Activated CD4-positive, alpha-beta T cell treated with anti-CD3 and anti-CD28 coated beads for 36 hours (primary cell): ENCODE measurements at regions of chr7 and their contacts with region 1.

Region 1: DNA sequence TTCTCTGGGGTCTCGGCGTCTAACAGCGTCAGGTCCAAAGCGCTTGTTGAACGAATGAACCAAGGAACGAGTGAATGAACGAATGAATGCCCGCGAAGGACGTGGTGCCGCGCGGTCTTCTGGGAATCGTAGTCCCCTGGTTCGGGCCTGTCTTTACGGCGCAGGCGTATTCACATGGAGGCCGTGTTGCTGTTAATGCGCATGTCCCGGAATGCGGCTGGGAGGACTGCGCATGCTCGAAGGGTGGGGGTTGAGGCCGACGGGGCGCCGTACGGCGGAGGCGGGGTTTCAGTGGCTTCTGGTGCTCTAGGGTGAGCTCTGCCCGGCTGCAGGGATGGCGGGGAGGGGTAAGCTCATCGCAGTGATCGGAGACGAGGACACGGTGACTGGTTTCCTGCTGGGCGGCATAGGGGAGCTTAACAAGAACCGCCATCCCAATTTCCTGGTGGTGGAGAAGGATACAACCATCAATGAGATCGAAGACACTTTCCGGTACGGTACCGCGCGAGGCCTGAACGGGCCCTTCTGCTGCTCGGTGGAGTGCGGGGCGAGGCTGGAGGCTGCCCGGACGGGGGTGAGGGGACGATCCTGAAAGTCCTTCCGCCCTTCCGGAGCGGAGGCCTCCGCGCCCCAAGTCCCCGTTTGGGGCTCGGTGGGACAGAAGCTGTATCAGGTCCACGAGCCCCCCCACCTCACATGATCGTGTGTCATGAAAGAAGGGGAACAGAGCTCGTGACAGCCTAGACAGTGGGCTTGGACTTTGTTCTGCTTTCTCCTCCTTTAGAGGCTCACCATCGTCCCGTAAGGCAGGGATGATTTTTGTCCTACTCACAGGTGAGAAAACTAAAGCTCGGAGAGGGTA is at the start of gene ATP6V1F:
- DNase-seq: peak; percentile 100
- ATAC-seq: peak; percentile 91
- H3K4me3 Mint-ChIP-seq: peak within 1 kb of the TSS; percentile 77
- H3K27ac Mint-ChIP-seq: peak within 1 kb of the TSS; percentile 90
- H3K4me1 Mint-ChIP-seq: peaks cover 13% of the 10 kb centered on the region
- H3K27me3 Mint-ChIP-seq: no peaks in the 10 kb centered on the region
- total RNA-seq, gene ATP6V1F: 109 to 159 TPM

Region 2: DNA sequence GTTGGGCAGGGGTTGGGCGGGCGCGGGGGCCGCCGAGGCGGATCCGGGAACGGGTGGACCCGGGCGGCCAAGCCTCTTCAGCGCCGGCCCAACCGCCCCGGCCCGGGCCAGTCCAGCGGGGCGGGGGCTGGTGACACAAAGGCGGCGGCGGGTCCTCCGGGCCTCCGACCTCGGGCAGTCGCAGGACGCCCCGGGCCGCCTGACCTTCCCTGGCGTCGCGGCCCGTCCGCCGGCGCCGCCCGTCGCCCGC is 332.0 kb before region 1 on chr7:
- CTCF ChIA-PET with region 1: no interaction called
- POLR2A ChIA-PET with region 1: no interaction called
- intact Hi-C with region 1: loop called (anchors 1 to 10 kb)
- DNase-seq: no peak
- ATAC-seq: no peak
- H3K4me3 Mint-ChIP-seq: peak overlapping the region; percentile 95
- H3K27ac Mint-ChIP-seq: no peak overlapping the region
- H3K4me1 Mint-ChIP-seq: peaks cover 27% of the 10 kb centered on the region
- H3K27me3 Mint-ChIP-seq: no peaks in the 10 kb centered on the region

Region 3: DNA sequence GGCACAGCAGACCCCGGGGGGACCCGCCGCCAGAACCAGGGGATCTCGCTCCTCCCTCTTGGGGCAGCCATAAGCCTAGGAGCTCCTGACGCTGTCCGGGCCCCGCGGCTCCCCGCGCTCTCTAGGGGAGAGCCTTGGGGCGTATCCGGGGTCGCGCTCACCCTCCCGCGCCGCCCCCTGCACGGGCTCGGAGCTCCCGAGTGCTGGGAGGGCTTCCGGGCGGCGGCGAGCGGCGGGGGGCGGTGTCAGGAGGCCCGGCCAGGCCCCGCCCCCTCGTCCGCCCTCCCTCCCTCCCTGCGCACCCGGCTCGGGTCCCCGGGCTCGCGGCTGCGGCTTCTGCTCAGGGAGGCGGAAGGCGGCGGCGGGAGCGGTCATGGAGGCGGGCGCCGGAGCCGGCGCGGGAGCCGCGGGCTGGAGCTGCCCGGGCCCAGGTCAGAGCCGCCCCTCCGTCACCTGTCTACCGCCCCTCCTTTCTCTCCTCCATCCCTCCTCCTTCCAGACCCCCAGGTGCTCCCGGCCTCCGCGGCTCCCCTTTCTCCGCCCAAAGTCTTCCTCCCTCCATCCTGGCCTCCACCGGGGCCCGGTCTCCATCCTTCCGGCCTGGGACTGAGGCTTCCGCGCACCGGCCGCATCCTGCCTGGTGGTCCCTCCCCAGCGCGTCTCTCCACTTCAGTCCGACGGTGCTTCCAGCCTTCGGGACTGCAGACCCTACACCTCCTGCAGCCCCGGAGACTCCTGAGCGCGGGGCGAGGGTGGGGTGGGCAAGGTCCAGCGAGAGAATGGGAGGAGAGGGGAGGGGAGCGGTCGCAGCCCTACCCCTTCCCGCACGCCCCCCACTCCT is 71.5 kb before region 1 on chr7:
- CTCF ChIA-PET with region 1: no interaction called
- POLR2A ChIA-PET with region 1: interaction called, 3 read pairs
- intact Hi-C with region 1: loop called (anchors 1 to 10 kb)
- DNase-seq: peak; percentile 88
- ATAC-seq: peak; percentile 91
- H3K4me3 Mint-ChIP-seq: peak overlapping the region; percentile 75
- H3K27ac Mint-ChIP-seq: peak overlapping the region; percentile 28
- H3K4me1 Mint-ChIP-seq: peaks cover 5% of the 10 kb centered on the region
- H3K27me3 Mint-ChIP-seq: peaks cover 9% of the 10 kb centered on the region

Region 4: DNA sequence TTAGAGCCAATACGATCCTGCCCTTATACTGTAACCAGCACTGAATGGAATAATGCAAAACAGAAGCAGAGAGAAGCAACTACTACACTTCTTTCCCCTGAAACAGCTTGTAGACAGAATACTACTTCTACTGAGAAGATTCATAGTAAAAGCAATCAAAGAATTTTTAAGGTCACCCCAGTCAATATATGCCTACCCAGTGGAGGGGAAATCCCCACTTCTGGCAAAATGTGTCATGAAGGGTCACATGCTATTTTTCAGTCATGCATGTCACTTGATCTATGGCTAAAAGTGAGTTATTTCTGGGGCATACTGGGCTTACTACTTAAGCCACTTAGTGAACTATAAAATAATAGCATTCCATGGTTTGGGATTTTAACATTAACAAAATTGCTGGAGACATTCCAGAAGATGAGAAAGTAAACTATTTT is 100.5 kb after region 1 on chr7:
- CTCF ChIA-PET with region 1: interaction called, 3 read pairs
- POLR2A ChIA-PET with region 1: no interaction called
- intact Hi-C with region 1: loop called in 1 of 2 experiments (anchors 2 kb)
- DNase-seq: peak; percentile 70
- ATAC-seq: peak; percentile 85
- H3K4me3 Mint-ChIP-seq: peak overlapping the region; percentile 21
- H3K27ac Mint-ChIP-seq: peak overlapping the region; percentile 93
- H3K4me1 Mint-ChIP-seq: peaks cover 35% of the 10 kb centered on the region
- H3K27me3 Mint-ChIP-seq: no peaks in the 10 kb centered on the region